ENCODE measurements at regions of chr18 and their contacts with region 1.

Region 1: DNA sequence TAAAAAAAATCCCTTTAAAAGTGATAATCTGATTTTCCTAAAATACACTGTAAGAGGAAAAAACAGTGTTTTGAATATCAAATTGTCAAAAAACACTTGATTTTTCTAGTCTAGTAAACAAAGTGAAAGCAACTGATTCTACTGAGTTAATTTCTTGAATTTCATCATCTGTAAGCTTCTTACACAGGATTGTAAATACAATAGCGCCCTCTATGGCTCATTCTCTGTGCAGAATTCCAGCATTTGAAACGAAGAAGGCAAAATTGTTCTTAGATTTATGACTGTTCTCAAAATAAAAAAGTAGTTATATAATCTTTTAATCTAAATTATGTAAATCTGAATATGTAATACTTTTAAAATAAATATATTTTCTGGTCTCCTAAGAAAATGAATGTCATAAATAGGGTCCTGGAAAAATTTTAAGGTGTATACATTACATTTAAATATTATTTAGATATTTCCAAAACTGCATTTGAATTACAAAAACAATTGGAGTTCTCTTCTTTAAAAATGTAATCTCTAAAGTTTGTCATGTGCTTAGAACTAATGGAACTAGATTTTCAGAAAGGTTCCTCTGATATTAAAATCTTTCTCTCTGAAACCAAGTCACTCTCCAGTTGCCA is 176.9 kb upstream of the MC4R start:
- DNase-seq: peak in 1 of 2 donors; percentile 21
- ATAC-seq: no peak
- H3K4me3 ChIP-seq: no peak overlapping the region
- H3K27ac ChIP-seq: no peak overlapping the region
- H3K4me1 ChIP-seq: no peaks in the 10 kb centered on the region
- H3K27me3 ChIP-seq: peaks cover 0 to 12% (median 0%) of the 10 kb centered on the region in 7 donors
- CTCF ChIP-seq: peak; percentile 45 to 84 (median 75)

Region 2: GRCh38 chr18:59837586-59837985 is 711.9 kb before region 1 on chr18:
- intact Hi-C with region 1: loop called in 8 of 10 experiments (anchors 5 to 10 kb)
- DNase-seq: peak in 1 of 2 donors; percentile 21
- ATAC-seq: peak in 4 of 8 donors; percentile 11 to 51 (median 44)
- H3K4me3 ChIP-seq: no peak overlapping the region
- H3K27ac ChIP-seq: no peak overlapping the region
- H3K4me1 ChIP-seq: peaks cover 0 to 4% (median 0%) of the 10 kb centered on the region in 9 donors
- H3K27me3 ChIP-seq: peaks cover 0 to 38% (median 0%) of the 10 kb centered on the region in 7 donors
- CTCF ChIP-seq: peak; percentile 73 to 87 (median 84)

Region 3: GRCh38 chr18:59988098-59988706 is 561.2 kb before region 1 on chr18:
- intact Hi-C with region 1: loop called in 8 of 10 experiments (anchors 5 to 10 kb)
- DNase-seq: no peak
- ATAC-seq: no peak
- H3K4me3 ChIP-seq: no peak overlapping the region
- H3K27ac ChIP-seq: no peak overlapping the region
- H3K4me1 ChIP-seq: no peaks in the 10 kb centered on the region
- H3K27me3 ChIP-seq: peaks cover 0 to 32% (median 20%) of the 10 kb centered on the region in 7 donors
- CTCF ChIP-seq: peak; percentile 63 to 95 (median 88)

Region 4: GRCh38 chr18:59996370-59996966 is 553.0 kb before region 1 on chr18:
- intact Hi-C with region 1: loop called in 3 of 10 experiments (anchors 5 to 10 kb)
- DNase-seq: no peak
- ATAC-seq: no peak
- H3K4me3 ChIP-seq: no peak overlapping the region
- H3K27ac ChIP-seq: no peak overlapping the region
- H3K4me1 ChIP-seq: no peaks in the 10 kb centered on the region
- H3K27me3 ChIP-seq: peaks cover 0 to 48% (median 14%) of the 10 kb centered on the region in 7 donors
- CTCF ChIP-seq: peak in 7 of 9 donors; percentile 22 to 45 (median 37)

Region 5: GRCh38 chr18:60090170-60090569 is 459.3 kb before region 1 on chr18:
- intact Hi-C with region 1: loop called in 1 of 10 experiments (anchors 10 kb)
- DNase-seq: no peak
- ATAC-seq: peak in 1 of 8 donors; percentile 35
- H3K4me3 ChIP-seq: no peak overlapping the region
- H3K27ac ChIP-seq: no peak overlapping the region
- H3K4me1 ChIP-seq: no peaks in the 10 kb centered on the region
- H3K27me3 ChIP-seq: no peaks in the 10 kb centered on the region
- CTCF ChIP-seq: peak in 4 of 9 donors; percentile 8 to 30 (median 17)

Region 6: DNA sequence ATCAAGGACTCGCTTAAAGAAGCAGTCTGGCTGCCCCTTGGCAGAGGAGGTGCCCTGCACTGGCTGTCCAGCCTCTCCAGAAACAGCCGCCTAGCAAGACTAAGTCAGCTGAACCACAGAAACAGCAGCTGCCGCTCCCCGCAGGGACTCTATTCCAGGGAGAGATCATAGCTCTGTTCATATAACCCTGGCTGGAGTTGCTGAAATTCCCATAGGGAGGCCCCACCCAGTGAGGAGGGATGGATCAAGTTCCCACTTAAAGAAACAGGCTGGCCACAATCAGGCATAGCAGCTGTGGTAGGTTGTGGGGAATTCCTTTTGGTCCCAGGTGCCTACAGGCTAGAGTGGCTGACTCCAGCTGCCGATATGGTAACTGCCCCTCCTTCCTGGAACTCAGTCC is 102.6 kb before region 1 on chr18:
- intact Hi-C with region 1: no loop called
- DNase-seq: no peak
- ATAC-seq: no peak
- H3K4me3 ChIP-seq: no peak overlapping the region
- H3K27ac ChIP-seq: no peak overlapping the region
- H3K4me1 ChIP-seq: no peaks in the 10 kb centered on the region
- H3K27me3 ChIP-seq: no peaks in the 10 kb centered on the region
- CTCF ChIP-seq: no peak

Region 7: GRCh38 chr18:60693426-60693825 is 144.0 kb after region 1 on chr18:
- intact Hi-C with region 1: no loop called
- DNase-seq: no peak
- ATAC-seq: no peak
- H3K4me3 ChIP-seq: no peak overlapping the region
- H3K27ac ChIP-seq: no peak overlapping the region
- H3K4me1 ChIP-seq: no peaks in the 10 kb centered on the region
- H3K27me3 ChIP-seq: no peaks in the 10 kb centered on the region
- CTCF ChIP-seq: no peak